Activated T-helper 1 cell treated with anti-CD3 and anti-CD28 coated beads, Interleukin-12 subunit alpha, Interleukin-12 subunit beta, Interleukin-2, Interleukin-4 antibody, amounts not matched to agents 30 ng/mL and 10 ng/mL and 1 ng/mL, durations not matched to agents 14 hours and 24 hours and 36 hours (primary cell): ENCODE measurements at regions of chr20 and their contacts with region 1.

Region 1: DNA sequence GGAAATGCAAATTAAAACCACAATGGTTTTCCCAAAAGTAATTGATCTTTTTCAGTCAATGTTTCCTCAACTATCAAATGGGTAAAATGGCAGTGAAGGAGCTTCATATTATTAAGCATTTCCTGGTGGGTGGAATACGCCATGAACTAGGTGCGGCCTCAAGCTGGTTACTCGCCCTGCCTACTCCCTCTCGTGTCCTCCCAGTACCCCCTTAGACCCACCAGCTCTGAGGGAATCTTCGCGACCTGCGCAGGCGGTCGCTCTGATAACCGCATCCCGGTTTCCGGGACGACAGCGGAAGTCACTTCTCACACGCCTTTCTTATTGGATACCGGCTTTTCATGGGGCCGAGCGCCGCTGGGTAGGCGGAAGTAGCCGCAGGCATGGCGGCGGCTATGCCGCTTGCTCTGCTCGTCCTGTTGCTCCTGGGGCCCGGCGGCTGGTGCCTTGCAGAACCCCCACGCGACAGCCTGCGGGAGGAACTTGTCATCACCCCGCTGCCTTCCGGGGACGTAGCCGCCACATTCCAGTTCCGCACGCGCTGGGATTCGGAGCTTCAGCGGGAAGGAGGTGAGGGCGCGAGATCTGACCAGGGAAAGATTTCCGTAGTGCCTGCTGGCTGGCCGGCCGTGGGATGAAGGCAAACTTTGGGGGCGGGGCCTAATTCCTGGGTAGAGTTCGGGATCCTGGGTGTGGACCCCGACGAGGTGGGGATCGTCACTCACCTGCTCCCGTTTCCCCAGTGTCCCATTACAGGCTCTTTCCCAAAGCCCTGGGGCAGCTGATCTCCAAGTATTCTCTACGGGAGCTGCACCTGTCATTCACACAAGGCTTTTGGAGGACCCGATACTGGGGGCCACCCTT is at the start of gene PIGT:
- DNase-seq: peak; percentile 86
- H3K4me3 Mint-ChIP-seq: peak within 1 kb of the TSS; percentile 94
- H3K27ac Mint-ChIP-seq: peak within 1 kb of the TSS; percentile 90
- H3K4me1 Mint-ChIP-seq: peaks cover 39% of the 10 kb centered on the region
- H3K27me3 Mint-ChIP-seq: no peaks in the 10 kb centered on the region
- total RNA-seq, gene PIGT: 89.8 and 90.6 TPM in 2 replicates

Region 2: DNA sequence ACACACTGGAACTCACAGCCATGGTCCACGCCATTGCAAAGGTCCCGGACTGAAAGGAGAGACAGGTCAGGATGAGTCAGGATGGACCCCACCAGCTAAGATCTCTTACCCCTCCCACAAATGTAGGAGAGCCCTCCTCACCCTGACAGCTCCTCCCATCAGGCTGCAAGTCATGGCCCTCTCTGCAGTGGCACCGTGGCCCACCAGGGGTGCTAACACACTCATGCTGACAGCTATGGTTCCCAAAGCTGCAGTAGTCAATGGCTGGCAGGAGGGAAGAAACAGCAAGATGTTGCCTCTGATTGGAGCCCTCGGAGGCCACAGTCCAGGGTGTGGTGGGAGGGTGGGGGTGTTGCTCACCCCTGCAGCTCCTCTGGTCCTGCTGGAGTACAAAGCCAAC is 115.0 kb before region 1 on chr20:
- intact Hi-C with region 1: no loop called
- DNase-seq: no peak
- H3K4me3 Mint-ChIP-seq: no peak overlapping the region
- H3K27ac Mint-ChIP-seq: no peak overlapping the region
- H3K4me1 Mint-ChIP-seq: peaks cover 49% of the 10 kb centered on the region
- H3K27me3 Mint-ChIP-seq: no peaks in the 10 kb centered on the region

Region 3: GRCh38 chr20:45436732-45437391 is 20.9 kb after region 1 on chr20:
- intact Hi-C with region 1: loop called (anchors 1 kb)
- DNase-seq: peak; percentile 78
- H3K4me3 Mint-ChIP-seq: peak overlapping the region; percentile 69
- H3K27ac Mint-ChIP-seq: no peak overlapping the region
- H3K4me1 Mint-ChIP-seq: peaks cover 33% of the 10 kb centered on the region
- H3K27me3 Mint-ChIP-seq: no peaks in the 10 kb centered on the region

Region 4: GRCh38 chr20:45456632-45457031 is 40.6 kb after region 1 on chr20:
- intact Hi-C with region 1: no loop called
- DNase-seq: no peak
- H3K4me3 Mint-ChIP-seq: no peak overlapping the region
- H3K27ac Mint-ChIP-seq: no peak overlapping the region
- H3K4me1 Mint-ChIP-seq: no peaks in the 10 kb centered on the region
- H3K27me3 Mint-ChIP-seq: peaks cover 10% of the 10 kb centered on the region